Vagina (tissue), 2 donors: ENCODE measurements at regions of chr12 and their contacts with region 1.

Region 1: GRCh38 chr12:15151161-15152120 is 69.8 kb downstream of the RERG start:
- DNase-seq: no peak
- H3K4me3 ChIP-seq: no peak overlapping the region
- H3K27ac ChIP-seq: peak overlapping the region; percentile 73
- H3K4me1 ChIP-seq: peaks cover 41% of the 10 kb centered on the region
- H3K27me3 ChIP-seq: no peaks in the 10 kb centered on the region
- CTCF ChIP-seq: peak in 1 of 3 experiments; percentile 67
- POLR2A ChIP-seq: no peak

Region 2: GRCh38 chr12:15208125-15208524 is 56.7 kb after region 1 on chr12:
- intact Hi-C with region 1: loop called (anchors 5 kb)
- DNase-seq: no peak
- H3K4me3 ChIP-seq: no peak overlapping the region
- H3K27ac ChIP-seq: peak overlapping the region; percentile 38
- H3K4me1 ChIP-seq: peaks cover 29% of the 10 kb centered on the region
- H3K27me3 ChIP-seq: no peaks in the 10 kb centered on the region
- CTCF ChIP-seq: peak in 1 of 3 experiments; percentile 11
- POLR2A ChIP-seq: no peak

Region 3: DNA sequence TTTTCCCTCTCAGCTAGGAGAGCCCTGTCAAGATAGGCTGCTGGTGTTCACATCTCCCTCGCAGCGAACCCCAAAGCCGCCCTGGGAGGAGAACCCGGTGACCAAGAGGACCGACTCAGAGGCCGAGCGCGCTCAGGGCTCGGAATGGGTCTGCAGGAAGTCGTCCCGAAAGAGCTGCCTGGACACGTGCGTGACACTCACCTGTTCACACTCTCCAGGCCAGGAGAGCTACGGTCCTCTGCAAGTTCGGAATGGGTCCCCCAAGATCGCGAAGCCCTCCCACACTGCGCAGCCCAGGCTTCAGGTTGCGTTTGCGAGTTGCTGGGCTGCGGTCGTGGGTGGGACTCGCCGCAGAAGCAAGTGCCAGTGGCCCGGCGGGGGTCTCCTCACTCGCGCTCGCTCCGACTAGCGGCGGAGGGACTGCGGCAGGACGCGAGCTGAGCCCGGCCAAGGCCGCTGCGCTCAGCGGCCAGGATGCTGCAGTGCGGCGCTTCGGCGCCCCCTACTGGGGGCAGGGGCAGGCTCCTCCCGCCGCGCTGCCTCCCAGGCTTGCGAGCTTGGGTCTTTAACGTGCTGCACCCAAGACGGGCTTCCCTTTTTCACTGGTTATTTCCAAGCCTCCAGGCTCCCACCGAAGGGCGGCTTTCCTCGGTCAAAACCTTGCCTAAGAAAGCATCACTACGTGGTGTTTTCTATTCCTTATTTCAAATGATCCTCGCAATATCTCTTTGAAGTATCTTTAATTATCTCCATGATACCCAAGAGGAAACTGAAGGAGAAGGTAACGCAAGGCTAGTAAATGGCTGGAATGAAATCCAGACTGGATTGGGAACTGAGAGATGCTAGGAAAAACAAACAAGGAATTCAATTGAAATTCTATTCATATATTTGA is 69.8 kb after region 1 on chr12 and contains the start of gene RERG:
- intact Hi-C with region 1: loop called (anchors 5 kb)
- DNase-seq: peak in 1 of 2 donors; percentile 93
- H3K4me3 ChIP-seq: peak within 1 kb of the TSS; percentile 60 to 61
- H3K27ac ChIP-seq: peak within 1 kb of the TSS; percentile 83
- H3K4me1 ChIP-seq: peaks cover 21% of the 10 kb centered on the region
- H3K27me3 ChIP-seq: no peaks in the 10 kb centered on the region
- CTCF ChIP-seq: peak; percentile 78 to 98 (median 95)
- POLR2A ChIP-seq: peak in 1 of 2 donors; percentile 16
- total RNA-seq, gene RERG: 31.9 TPM